Activated CD8-positive, alpha-beta T cell treated with anti-CD3 and anti-CD28 coated beads for 36 hours (primary cell): ENCODE measurements at regions of chr17 and their contacts with region 1.

Region 1: DNA sequence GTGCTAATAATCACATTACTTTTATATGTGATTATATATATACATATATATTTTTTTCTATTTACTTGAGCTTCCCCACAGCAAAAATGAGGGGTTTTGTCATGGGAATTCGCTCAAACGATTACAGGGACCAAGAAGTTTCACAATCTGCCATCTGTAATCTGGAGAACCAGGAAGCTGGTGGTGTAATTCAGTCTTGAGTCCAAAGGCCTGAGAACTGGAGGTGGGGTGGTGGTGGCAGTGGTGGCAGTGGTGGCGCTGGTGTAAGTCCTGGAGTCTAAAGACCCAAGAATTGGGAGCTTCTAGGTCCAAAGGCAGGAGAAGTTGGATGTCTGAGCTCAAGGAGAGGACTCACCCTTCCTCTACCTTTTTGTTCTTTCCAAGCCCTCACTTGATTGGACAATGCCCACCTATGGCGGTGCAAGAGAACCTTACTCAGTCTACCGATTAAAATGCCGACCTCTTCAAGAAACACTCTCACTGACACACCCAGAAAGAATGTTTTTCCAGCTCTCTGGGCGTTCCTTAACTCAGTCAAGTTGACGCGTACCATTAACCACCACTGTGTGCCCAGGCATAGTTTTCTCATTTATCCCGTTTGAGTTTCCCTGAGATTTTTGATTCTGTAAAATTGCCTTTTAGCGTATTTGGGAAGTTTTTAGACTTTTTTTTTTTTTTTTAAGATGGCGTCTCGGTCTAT is 31.9 kb downstream of the POLR2A start:
- DNase-seq: no peak
- ATAC-seq: no peak
- H3K4me3 Mint-ChIP-seq: no peak overlapping the region
- H3K27ac Mint-ChIP-seq: no peak overlapping the region
- H3K4me1 Mint-ChIP-seq: no peaks in the 10 kb centered on the region
- H3K27me3 Mint-ChIP-seq: no peaks in the 10 kb centered on the region
- CTCF ChIP-seq: no peak

Region 2: GRCh38 chr17:7435221-7435675 is 80.8 kb before region 1 on chr17 and contains the start of gene TMEM102:
- CTCF ChIA-PET with region 1: interaction called, 14 read pairs
- POLR2A ChIA-PET with region 1: interaction called, 4 read pairs
- intact Hi-C with region 1: no loop called
- DNase-seq: peak; percentile 99
- ATAC-seq: peak; percentile 82
- H3K4me3 Mint-ChIP-seq: peak within 1 kb of the TSS; percentile 94
- H3K27ac Mint-ChIP-seq: peak within 1 kb of the TSS; percentile 97
- H3K4me1 Mint-ChIP-seq: peaks cover 23% of the 10 kb centered on the region
- H3K27me3 Mint-ChIP-seq: peaks cover 12% of the 10 kb centered on the region
- CTCF ChIP-seq: no peak
- total RNA-seq, gene TMEM102: 12.5 to 14.2 TPM

Region 3: GRCh38 chr17:7463372-7463846 is 52.7 kb before region 1 on chr17:
- CTCF ChIA-PET with region 1: no interaction called
- POLR2A ChIA-PET with region 1: no interaction called
- intact Hi-C with region 1: no loop called
- DNase-seq: no peak
- ATAC-seq: no peak
- H3K4me3 Mint-ChIP-seq: no peak overlapping the region
- H3K27ac Mint-ChIP-seq: no peak overlapping the region
- H3K4me1 Mint-ChIP-seq: peaks cover 15% of the 10 kb centered on the region
- H3K27me3 Mint-ChIP-seq: no peaks in the 10 kb centered on the region
- CTCF ChIP-seq: no peak

Region 4: GRCh38 chr17:7502987-7503386 is 13.1 kb before region 1 on chr17:
- CTCF ChIA-PET with region 1: interaction called, 10 read pairs
- POLR2A ChIA-PET with region 1: interaction called, 5 read pairs
- intact Hi-C with region 1: no loop called
- DNase-seq: peak; percentile 24
- ATAC-seq: peak; percentile 50
- H3K4me3 Mint-ChIP-seq: no peak overlapping the region
- H3K27ac Mint-ChIP-seq: no peak overlapping the region
- H3K4me1 Mint-ChIP-seq: no peaks in the 10 kb centered on the region
- H3K27me3 Mint-ChIP-seq: no peaks in the 10 kb centered on the region
- CTCF ChIP-seq: no peak

Region 5: GRCh38 chr17:7548585-7549400 is 32.7 kb after region 1 on chr17 and contains the start of gene TNFSF12:
- CTCF ChIA-PET with region 1: interaction called, 27 read pairs
- POLR2A ChIA-PET with region 1: interaction called, 4 read pairs
- intact Hi-C with region 1: no loop called
- DNase-seq: peak; percentile 76
- ATAC-seq: peak; percentile 56
- H3K4me3 Mint-ChIP-seq: peak within 1 kb of the TSS; percentile 82
- H3K27ac Mint-ChIP-seq: peak within 1 kb of the TSS; percentile 77
- H3K4me1 Mint-ChIP-seq: peaks cover 54% of the 10 kb centered on the region
- H3K27me3 Mint-ChIP-seq: no peaks in the 10 kb centered on the region
- CTCF ChIP-seq: no peak
- total RNA-seq, gene TNFSF12: 11.8 to 13.8 TPM

Region 6: GRCh38 chr17:7589204-7589868 is 73.3 kb after region 1 on chr17:
- CTCF ChIA-PET with region 1: interaction called, 17 read pairs
- POLR2A ChIA-PET with region 1: interaction called, 3 read pairs
- intact Hi-C with region 1: no loop called
- DNase-seq: peak; percentile 79
- ATAC-seq: peak; percentile 81
- H3K4me3 Mint-ChIP-seq: no peak overlapping the region
- H3K27ac Mint-ChIP-seq: no peak overlapping the region
- H3K4me1 Mint-ChIP-seq: peaks cover 15% of the 10 kb centered on the region
- H3K27me3 Mint-ChIP-seq: no peaks in the 10 kb centered on the region
- CTCF ChIP-seq: peak; percentile 82